Mucosa of descending colon (tissue), 3 donors: ENCODE measurements at regions of chr11 and their contacts with region 1.

Region 1: GRCh38 chr11:10808553-10809372 is at the start of gene EIF4G2:
- DNase-seq: peak; percentile 97 to 99 (median 99)
- ATAC-seq: peak; percentile 93
- H3K4me3 ChIP-seq: peak within 1 kb of the TSS; percentile 100
- H3K4me1 ChIP-seq: peaks cover 30% of the 10 kb centered on the region
- CTCF ChIP-seq: peak; percentile 7
- total RNA-seq, gene EIF4G2: 776 to 976 (median 934) TPM

Region 2: GRCh38 chr11:10693509-10694081 is 115.2 kb before region 1 on chr11 and contains the start of gene IRAG1:
- intact Hi-C with region 1: no loop called
- DNase-seq: peak; percentile 27 to 64 (median 50)
- ATAC-seq: peak; percentile 62
- H3K4me3 ChIP-seq: no peak within 1 kb of the TSS
- H3K4me1 ChIP-seq: no peaks in the 10 kb centered on the region
- CTCF ChIP-seq: no peak
- total RNA-seq, gene IRAG1: 7.5 to 134 (median 15.4) TPM

Region 3: GRCh38 chr11:10857709-10858438 is 49.1 kb after region 1 on chr11 and contains the start of gene ZBED5:
- intact Hi-C with region 1: loop called in 1 of 2 experiments (anchors 5 kb)
- DNase-seq: peak; percentile 98 to 99 (median 98)
- ATAC-seq: peak; percentile 93
- H3K4me3 ChIP-seq: peak within 1 kb of the TSS; percentile 47
- H3K4me1 ChIP-seq: peaks cover 20% of the 10 kb centered on the region
- CTCF ChIP-seq: no peak
- total RNA-seq, gene ZBED5: 39.5 to 54.2 (median 42.6) TPM

Region 4: GRCh38 chr11:10920205-10920604 is 111.4 kb after region 1 on chr11:
- intact Hi-C with region 1: loop called in 1 of 2 experiments (anchors 10 kb)
- DNase-seq: no peak
- ATAC-seq: no peak
- H3K4me3 ChIP-seq: no peak overlapping the region
- H3K4me1 ChIP-seq: no peaks in the 10 kb centered on the region
- CTCF ChIP-seq: no peak